Aorta (tissue), 5 donors: ENCODE measurements at regions of chr4 and their contacts with region 1.

Region 1: DNA sequence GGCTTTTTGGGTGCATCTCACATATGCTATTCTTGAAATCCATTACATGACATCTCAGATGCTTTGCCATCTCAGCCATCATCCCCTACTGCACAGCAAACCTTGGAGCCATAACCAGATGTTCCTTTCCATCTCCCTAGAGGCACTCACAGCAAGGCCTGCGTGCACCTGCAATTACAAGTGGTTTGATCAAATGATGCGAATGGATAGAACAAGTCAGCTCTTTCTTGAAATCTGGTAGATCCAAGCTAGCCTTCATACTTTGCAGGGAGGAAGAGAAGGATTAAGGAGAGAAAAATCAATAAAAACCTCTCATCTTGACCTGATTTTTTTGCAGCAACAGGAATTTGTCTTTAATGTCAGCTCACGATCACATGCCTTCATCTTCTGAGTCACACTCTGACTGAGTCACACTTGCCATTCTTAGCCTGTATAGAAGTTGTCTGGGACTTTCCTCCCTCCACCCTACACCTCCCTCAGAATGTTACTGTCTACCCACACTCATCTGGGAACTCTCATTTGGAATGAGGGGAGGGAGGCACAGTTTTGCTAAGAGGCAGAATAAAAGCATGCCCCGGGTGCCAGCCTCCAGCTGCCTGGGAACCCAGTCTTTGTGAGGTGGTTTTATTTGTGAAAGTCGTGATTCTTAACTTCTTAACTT is 11.9 kb upstream of the TRIML1 start:
- DNase-seq: no peak
- ATAC-seq: no peak
- H3K4me3 ChIP-seq: no peak overlapping the region
- H3K27ac ChIP-seq: no peak overlapping the region
- H3K4me1 ChIP-seq: no peaks in the 10 kb centered on the region
- H3K27me3 ChIP-seq: no peaks in the 10 kb centered on the region

Region 2: DNA sequence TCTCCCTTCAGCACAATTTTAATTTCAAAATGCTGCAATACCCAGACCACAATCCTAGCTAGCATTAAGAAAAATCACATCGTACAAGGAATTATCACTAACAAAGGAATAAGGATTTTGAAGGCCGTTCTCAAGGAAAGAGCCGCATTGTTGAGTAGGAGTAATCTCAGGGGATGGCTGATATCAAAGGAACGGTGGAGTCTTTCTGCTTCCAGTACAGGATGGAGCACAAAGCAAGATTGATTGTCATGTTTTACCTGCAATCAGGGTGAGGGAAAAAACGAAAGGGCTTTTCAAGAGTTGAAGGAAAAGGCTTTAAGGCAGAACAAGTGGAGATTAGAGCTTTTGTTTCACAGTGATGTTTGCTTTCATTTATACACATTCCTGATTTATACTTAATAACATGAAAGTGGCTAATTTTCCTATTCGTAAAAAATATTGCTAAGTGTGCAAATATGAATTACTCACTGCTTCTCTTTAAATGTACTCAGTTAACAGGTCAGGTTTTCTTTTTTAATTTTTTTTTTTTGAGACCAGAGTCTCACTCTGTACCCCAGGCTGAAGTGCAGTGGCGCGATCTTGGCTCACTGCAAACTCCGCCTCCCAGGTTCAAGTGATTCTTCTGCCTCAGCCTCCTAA is 218.9 kb after region 1 on chr4:
- intact Hi-C with region 1: loop called in 1 of 2 experiments (anchors 10 kb)
- DNase-seq: no peak
- ATAC-seq: no peak
- H3K4me3 ChIP-seq: no peak overlapping the region
- H3K27ac ChIP-seq: no peak overlapping the region
- H3K4me1 ChIP-seq: no peaks in the 10 kb centered on the region
- H3K27me3 ChIP-seq: no peaks in the 10 kb centered on the region

Region 3: DNA sequence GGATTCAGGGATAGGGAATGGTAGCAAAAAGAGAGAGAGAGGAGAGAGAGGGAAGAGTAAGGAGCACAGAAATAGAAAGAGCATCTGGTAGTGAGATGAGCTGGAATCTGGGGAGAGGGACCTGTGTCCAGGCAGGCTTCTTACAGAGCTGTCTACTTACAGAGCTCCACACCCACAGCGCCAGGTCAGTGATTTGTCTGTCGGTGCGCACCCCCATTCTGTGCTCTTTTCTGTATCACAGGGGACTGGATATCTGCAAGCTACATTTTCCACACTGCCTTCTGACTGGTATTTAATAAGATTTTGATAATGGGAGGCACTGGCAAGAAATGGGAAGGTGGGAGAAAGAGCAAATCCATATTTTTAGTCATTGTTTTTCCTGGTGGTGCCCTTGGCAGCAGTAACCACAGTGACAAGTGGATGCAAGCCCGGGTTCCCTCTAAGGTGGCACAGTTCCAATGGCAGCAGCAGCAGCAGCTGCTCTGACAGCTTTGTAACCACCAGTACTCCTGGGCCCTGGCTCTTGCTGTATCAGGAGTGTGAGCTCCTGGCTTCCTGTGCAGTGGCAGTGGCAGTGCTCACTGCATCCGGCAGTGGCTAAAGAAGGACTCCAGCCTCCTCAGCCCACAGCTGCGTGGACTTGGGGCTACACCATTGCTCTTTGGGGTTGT is 312.4 kb after region 1 on chr4:
- intact Hi-C with region 1: no loop called
- DNase-seq: peak in 1 of 2 donors; percentile 54
- ATAC-seq: peak; percentile 63
- H3K4me3 ChIP-seq: no peak overlapping the region
- H3K27ac ChIP-seq: no peak overlapping the region
- H3K4me1 ChIP-seq: peaks cover 0 to 2% of the 10 kb centered on the region in 2 donors
- H3K27me3 ChIP-seq: no peaks in the 10 kb centered on the region